Activated B cell treated with CpG ODN at 0.5 μM for 24 hours (primary cell): ENCODE measurements at regions of chr6 and their contacts with region 1.

Region 1: DNA sequence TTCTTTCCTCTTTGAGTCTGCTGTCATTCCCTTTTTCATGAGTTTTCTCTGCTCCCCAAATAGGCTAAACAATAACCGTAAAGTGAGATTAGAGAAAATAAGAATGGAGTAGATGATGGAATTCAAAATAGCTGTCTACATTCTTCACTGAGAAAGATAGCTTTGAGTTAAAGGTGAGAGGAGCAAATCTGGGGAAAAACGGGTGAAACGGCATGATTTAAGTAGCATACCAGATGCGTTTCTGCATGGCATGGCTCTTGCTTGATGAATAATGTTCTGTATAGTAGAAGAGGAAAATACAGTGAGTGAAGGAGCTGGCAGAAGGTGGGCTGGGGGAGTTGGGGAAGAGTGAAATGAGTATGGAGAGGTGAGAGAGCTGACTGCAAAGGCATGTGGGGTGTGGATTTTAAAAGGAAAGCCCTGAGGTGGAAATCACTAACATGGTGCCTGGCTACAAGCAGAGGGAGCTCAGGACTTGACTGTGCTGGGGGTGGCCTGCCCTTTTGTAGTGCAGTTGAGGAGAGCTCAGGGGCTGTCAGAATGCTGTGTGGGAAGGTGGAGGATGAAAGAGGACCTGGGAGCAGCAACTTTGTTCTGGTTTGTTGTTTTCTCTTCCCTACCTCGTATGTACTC is 8.8 kb downstream of the BICRAL start:
- DNase-seq: no peak
- ATAC-seq: peak; percentile 6
- H3K4me3 Mint-ChIP-seq: no peak overlapping the region
- H3K27ac Mint-ChIP-seq: peak overlapping the region; percentile 65
- H3K4me1 Mint-ChIP-seq: peaks cover 22% of the 10 kb centered on the region
- H3K27me3 Mint-ChIP-seq: no peaks in the 10 kb centered on the region
- CTCF ChIP-seq: no peak

Region 2: GRCh38 chr6:42851599-42851998 is 60.9 kb after region 1 on chr6:
- CTCF ChIA-PET with region 1: no interaction called
- POLR2A ChIA-PET with region 1: interaction called, 17 read pairs
- intact Hi-C with region 1: no loop called
- DNase-seq: no peak
- ATAC-seq: no peak
- H3K4me3 Mint-ChIP-seq: no peak overlapping the region
- H3K27ac Mint-ChIP-seq: no peak overlapping the region
- H3K4me1 Mint-ChIP-seq: no peaks in the 10 kb centered on the region
- H3K27me3 Mint-ChIP-seq: no peaks in the 10 kb centered on the region
- CTCF ChIP-seq: no peak

Region 3: GRCh38 chr6:42928986-42929820 is 138.5 kb after region 1 on chr6 and contains the start of gene CNPY3:
- CTCF ChIA-PET with region 1: no interaction called
- POLR2A ChIA-PET with region 1: no interaction called
- intact Hi-C with region 1: no loop called
- DNase-seq: peak; percentile 84
- ATAC-seq: peak; percentile 74
- H3K4me3 Mint-ChIP-seq: peak within 1 kb of the TSS; percentile 97
- H3K27ac Mint-ChIP-seq: peak within 1 kb of the TSS; percentile 97
- H3K4me1 Mint-ChIP-seq: peaks cover 58% of the 10 kb centered on the region
- H3K27me3 Mint-ChIP-seq: no peaks in the 10 kb centered on the region
- CTCF ChIP-seq: no peak
- total RNA-seq, gene CNPY3: 120 and 121 TPM in 2 replicates

Region 4: GRCh38 chr6:43838276-43839036 is 1047.8 kb after region 1 on chr6:
- CTCF ChIA-PET with region 1: no interaction called
- POLR2A ChIA-PET with region 1: no interaction called
- intact Hi-C with region 1: no loop called
- DNase-seq: no peak
- ATAC-seq: no peak
- H3K4me3 Mint-ChIP-seq: no peak overlapping the region
- H3K27ac Mint-ChIP-seq: no peak overlapping the region
- H3K4me1 Mint-ChIP-seq: no peaks in the 10 kb centered on the region
- H3K27me3 Mint-ChIP-seq: peaks cover 10% of the 10 kb centered on the region
- CTCF ChIP-seq: no peak